ENCODE measurements at regions of chr6 and their contacts with region 1.

Region 1: DNA sequence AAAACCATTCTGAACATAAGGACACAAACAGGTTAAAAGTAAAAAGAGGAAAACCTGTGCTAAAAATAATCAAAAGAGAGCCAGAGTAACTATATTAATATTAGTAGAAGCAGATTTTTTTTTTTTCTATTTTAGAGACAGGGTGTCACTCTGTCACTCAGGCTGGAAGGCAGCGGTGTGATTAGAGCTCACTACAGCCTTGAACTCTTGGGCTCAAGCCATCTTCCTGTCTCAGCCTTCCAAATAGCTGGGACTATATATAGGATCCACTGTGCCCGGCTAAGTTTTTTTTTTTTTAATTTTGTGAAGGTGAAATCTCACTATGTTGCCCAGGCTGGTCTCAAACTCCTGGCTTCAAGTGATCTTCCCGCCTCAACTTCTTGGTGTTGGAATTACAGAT is 33.4 kb upstream of the PLN start:
- DNase-seq: peak; percentile 77

Region 2: GRCh38 chr6:118548136-118548535 is 33.4 kb after region 1 on chr6 and contains the start of gene PLN:
- intact Hi-C with region 1: loop called (anchors 5 kb)
- DNase-seq: no peak
- total RNA-seq, gene PLN: 2,070 TPM

Region 3: DNA sequence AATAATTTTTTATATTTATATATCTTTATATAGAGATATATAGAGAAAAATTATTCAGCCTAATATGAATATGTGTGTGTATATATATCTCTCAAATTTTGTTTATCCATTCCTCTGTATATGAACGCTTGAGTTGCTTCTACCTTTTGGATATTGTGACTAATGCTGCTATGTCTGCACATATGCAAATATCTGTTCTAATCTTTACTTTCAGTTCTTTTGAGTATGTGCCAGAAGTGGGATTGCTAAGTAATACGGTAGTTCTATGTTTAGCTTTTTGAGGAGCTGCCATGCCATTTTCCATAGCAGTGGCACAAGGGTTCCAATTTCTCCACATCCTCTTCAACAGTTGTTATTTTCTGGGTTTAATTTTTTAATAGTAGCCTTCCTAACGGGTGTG is 209.5 kb after region 1 on chr6:
- intact Hi-C with region 1: no loop called
- DNase-seq: no peak

Measured in cardiac septum (tissue), 1 donor.